A549 (cell line): ENCODE measurements at regions of chr15 and their contacts with region 1.

Region 1: DNA sequence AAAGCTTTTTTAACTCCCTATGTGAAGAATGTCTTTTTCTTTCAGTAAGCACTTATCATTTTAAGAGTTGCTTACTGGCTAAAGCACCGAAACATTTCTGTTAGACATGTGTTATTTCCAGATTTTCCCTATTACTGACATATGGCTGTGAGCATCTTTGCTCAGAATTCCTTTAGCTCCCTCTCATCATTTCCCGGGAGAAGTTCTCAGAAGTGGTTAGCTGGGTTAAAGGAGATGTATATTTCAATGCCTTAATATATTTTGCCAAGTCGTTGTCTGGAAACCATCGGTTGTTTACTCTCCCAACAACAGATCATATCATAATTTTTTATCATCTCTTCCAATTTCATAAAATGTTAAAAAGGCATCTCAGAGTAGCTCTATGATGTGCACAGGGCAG is 396.5 kb downstream of the OCA2 start:
- DNase-seq: no peak
- ATAC-seq: no peak
- H3K4me3 ChIP-seq: no peak overlapping the region
- H3K27ac ChIP-seq: no peak overlapping the region
- H3K4me1 ChIP-seq: no peaks in the 10 kb centered on the region
- CTCF ChIP-seq: no peak
- EP300 ChIP-seq: no peak
- POLR2A ChIP-seq: no peak
- RAD21 ChIP-seq: no peak

Region 2: DNA sequence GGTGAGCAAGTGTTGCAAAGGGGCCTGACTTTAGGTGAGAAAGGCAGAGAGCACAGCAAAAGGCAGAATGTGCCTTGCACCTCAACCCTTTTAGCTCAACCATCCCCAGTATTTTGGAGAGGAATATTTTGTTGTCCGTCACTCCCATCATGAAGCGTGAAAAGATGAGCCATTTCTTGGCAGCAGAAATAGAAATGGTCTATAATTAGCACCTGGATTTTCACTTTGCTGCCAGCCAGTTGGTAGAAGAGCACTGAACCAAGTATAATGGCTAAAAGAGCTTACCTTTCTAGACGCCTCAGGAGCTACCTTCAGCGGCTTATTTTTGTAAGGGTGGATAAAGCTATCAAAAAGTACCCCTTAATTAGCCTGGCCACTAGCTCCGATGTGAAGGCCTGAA is 10.1 kb before region 1 on chr15:
- CTCF ChIA-PET with region 1: interaction called, 14 read pairs
- POLR2A ChIA-PET with region 1: no interaction called
- DNase-seq: no peak
- ATAC-seq: no peak
- H3K4me3 ChIP-seq: no peak overlapping the region
- H3K27ac ChIP-seq: no peak overlapping the region
- H3K4me1 ChIP-seq: no peaks in the 10 kb centered on the region
- CTCF ChIP-seq: no peak
- EP300 ChIP-seq: no peak
- POLR2A ChIP-seq: no peak
- RAD21 ChIP-seq: no peak